ENCODE measurements at regions of chr5 and their contacts with region 1.

Region 1: GRCh38 chr5:76582230-76583162 is 40.7 kb downstream of the F2RL2 start:
- DNase-seq: peak in 1 of 9 experiments; percentile 31
- ATAC-seq: no peak
- H3K4me3 ChIP-seq: no peak overlapping the region
- H3K4me3 Mint-ChIP-seq: no peak overlapping the region
- H3K27ac ChIP-seq: no peak overlapping the region
- H3K27ac Mint-ChIP-seq: peak overlapping the region; percentile 23
- H3K4me1 ChIP-seq: no peaks in the 10 kb centered on the region
- H3K4me1 Mint-ChIP-seq: peaks cover 13% of the 10 kb centered on the region
- H3K27me3 ChIP-seq: no peaks in the 10 kb centered on the region
- H3K27me3 Mint-ChIP-seq: no peaks in the 10 kb centered on the region
- CTCF ChIP-seq: no peak

Region 2: DNA sequence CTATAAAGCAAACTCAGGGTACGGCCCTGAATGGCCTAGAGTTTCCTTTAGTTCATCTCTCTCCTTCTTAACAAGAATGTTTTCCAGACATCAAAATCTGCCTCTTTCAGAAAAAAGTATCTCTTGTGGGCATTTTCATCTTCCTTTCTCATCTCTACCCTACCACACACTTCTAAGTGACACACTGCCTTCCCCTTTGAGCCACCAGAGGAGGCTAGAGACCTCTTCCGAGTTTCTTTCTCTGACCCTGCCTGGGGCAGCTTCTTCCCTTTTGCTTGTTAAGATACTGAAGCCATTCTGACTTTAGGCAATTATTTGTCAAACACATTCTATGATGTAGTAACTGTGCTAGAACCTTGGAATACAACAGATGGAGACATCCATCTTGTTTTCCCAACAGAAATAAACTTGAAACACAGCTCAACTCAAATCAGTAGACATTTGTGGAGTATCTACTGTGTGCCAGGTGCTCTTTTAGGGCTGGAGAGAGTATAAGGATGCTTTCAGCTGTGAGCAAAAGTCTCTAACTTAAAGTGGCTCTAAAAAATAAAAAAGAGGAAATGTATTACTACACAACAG is 507.9 kb before region 1 on chr5:
- CTCF ChIA-PET with region 1: interaction called, 5 read pairs
- POLR2A ChIA-PET with region 1: no interaction called
- intact Hi-C with region 1: loop called in 1 of 2 experiments (anchors 2 kb)
- DNase-seq: peak in 3 of 9 experiments; percentile 19 to 54 (median 39)
- ATAC-seq: peak; percentile 59
- H3K4me3 ChIP-seq: no peak overlapping the region
- H3K4me3 Mint-ChIP-seq: no peak overlapping the region
- H3K27ac ChIP-seq: no peak overlapping the region
- H3K27ac Mint-ChIP-seq: no peak overlapping the region
- H3K4me1 ChIP-seq: no peaks in the 10 kb centered on the region
- H3K4me1 Mint-ChIP-seq: no peaks in the 10 kb centered on the region
- H3K27me3 ChIP-seq: no peaks in the 10 kb centered on the region
- H3K27me3 Mint-ChIP-seq: peaks cover 53% of the 10 kb centered on the region
- CTCF ChIP-seq: peak; percentile 43

Region 3: DNA sequence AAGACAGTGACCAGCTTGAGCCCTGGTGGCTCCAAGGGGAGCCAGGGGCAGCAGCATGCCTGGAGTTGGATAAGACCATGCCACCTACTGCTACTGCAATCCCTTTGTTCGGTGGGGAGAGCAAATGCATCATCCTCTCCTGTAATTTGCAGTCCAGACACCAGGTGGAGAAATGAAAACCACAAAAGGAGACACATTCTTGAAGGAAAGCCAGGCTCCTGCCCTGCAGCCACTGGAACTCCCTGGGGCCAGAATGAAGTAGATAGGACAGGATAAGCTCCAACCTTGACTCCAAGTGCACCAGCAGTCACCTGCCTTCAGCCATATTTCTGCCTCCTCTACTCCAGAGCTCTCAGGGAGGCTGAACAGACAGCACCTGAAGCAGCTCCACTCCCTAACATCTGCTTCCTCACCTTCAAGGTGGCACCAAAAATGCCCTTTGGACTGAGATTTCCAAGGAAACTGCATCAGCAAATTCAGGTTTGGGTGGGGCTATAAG is 244.5 kb before region 1 on chr5:
- CTCF ChIA-PET with region 1: interaction called, 7 read pairs
- POLR2A ChIA-PET with region 1: no interaction called
- intact Hi-C with region 1: loop called (anchors 1 kb)
- DNase-seq: peak in 8 of 9 experiments; percentile 14 to 77 (median 40)
- ATAC-seq: peak; percentile 84
- H3K4me3 ChIP-seq: no peak overlapping the region
- H3K4me3 Mint-ChIP-seq: no peak overlapping the region
- H3K27ac ChIP-seq: no peak overlapping the region
- H3K27ac Mint-ChIP-seq: no peak overlapping the region
- H3K4me1 ChIP-seq: peaks cover 20% of the 10 kb centered on the region
- H3K4me1 Mint-ChIP-seq: peaks cover 28% of the 10 kb centered on the region
- H3K27me3 ChIP-seq: no peaks in the 10 kb centered on the region
- H3K27me3 Mint-ChIP-seq: no peaks in the 10 kb centered on the region
- CTCF ChIP-seq: peak; percentile 35

Region 4: DNA sequence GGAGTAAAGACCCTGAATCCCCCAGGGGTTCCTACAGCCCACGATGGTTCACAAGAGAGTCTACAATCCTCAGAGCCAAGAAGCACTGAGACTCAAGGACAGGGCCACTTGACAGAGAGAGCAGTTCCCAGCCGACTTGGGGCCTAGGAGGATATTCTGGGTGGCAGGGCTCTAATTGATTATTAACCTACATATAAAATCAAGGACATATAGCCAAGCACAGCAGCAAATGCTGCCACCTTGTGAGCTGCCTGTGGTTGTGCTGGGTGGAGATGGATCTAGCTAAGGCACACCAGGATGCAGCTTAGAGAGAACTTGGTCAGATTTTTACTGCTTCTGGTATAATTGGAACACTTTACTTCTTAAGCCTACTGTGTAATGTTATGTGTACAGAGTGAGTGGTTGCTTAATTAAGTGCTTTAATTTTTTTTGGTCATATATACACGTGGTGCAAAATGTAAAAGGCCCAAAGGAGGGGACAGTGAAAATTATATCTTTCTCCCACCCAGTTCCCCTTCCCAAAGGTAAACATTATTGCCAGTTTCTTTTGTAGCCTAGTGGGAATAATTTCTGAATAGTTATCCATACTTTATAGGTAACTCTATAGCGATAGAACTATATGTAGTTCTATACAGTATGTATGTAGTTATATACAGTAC is 38.1 kb before region 1 on chr5:
- CTCF ChIA-PET with region 1: interaction called, 17 read pairs
- POLR2A ChIA-PET with region 1: interaction called, 3 read pairs
- intact Hi-C with region 1: loop called (anchors 2 to 5 kb)
- DNase-seq: peak; percentile 25 to 80 (median 53)
- ATAC-seq: peak; percentile 10
- H3K4me3 ChIP-seq: peak overlapping the region in 1 of 2 experiments; percentile 2
- H3K4me3 Mint-ChIP-seq: peak overlapping the region; percentile 77
- H3K27ac ChIP-seq: peak overlapping the region; percentile 77 to 91
- H3K27ac Mint-ChIP-seq: peak overlapping the region; percentile 97
- H3K4me1 ChIP-seq: peaks cover 68% of the 10 kb centered on the region
- H3K4me1 Mint-ChIP-seq: peaks cover 87% of the 10 kb centered on the region
- H3K27me3 ChIP-seq: no peaks in the 10 kb centered on the region
- H3K27me3 Mint-ChIP-seq: no peaks in the 10 kb centered on the region
- CTCF ChIP-seq: peak; percentile 66

Region 5: DNA sequence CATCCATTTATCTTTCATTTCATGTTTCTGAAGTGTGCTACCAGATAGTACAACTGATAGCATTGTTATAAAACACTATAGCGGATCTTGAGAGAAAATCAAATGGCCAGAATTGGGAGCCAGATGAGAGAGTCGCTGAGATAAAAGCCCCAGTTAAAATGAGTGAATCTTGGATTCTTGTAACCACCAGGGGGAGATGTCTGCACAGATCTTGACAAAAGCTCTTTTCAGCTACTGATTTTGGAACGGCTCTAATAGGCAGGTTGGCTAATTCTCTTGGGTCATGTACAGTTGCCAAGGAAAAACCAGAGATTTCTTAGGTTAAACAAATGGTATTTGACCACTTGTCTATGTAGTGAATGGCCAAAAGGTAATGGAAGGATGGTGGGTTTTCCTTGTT is 19.0 kb after region 1 on chr5:
- CTCF ChIA-PET with region 1: interaction called, 30 read pairs
- POLR2A ChIA-PET with region 1: no interaction called
- intact Hi-C with region 1: no loop called
- DNase-seq: peak in 4 of 9 experiments; percentile 14 to 74 (median 42)
- ATAC-seq: peak; percentile 69
- H3K4me3 ChIP-seq: no peak overlapping the region
- H3K4me3 Mint-ChIP-seq: no peak overlapping the region
- H3K27ac ChIP-seq: no peak overlapping the region
- H3K27ac Mint-ChIP-seq: no peak overlapping the region
- H3K4me1 ChIP-seq: no peaks in the 10 kb centered on the region
- H3K4me1 Mint-ChIP-seq: no peaks in the 10 kb centered on the region
- H3K27me3 ChIP-seq: no peaks in the 10 kb centered on the region
- H3K27me3 Mint-ChIP-seq: no peaks in the 10 kb centered on the region
- CTCF ChIP-seq: peak; percentile 69